ENCODE measurements at regions of chr15 and their contacts with region 1.

Region 1: GRCh38 chr15:69413822-69414700 is at the start of gene KIF23:
- DNase-seq: peak; percentile 89 to 92
- H3K4me3 ChIP-seq: peak within 1 kb of the TSS; percentile 86
- H3K27ac ChIP-seq: peak within 1 kb of the TSS; percentile 63
- H3K4me1 ChIP-seq: peaks cover 39% of the 10 kb centered on the region
- H3K27me3 ChIP-seq: no peaks in the 10 kb centered on the region
- CTCF ChIP-seq: no peak
- total RNA-seq, gene KIF23: 78.7 and 100 TPM in 2 replicates

Region 2: DNA sequence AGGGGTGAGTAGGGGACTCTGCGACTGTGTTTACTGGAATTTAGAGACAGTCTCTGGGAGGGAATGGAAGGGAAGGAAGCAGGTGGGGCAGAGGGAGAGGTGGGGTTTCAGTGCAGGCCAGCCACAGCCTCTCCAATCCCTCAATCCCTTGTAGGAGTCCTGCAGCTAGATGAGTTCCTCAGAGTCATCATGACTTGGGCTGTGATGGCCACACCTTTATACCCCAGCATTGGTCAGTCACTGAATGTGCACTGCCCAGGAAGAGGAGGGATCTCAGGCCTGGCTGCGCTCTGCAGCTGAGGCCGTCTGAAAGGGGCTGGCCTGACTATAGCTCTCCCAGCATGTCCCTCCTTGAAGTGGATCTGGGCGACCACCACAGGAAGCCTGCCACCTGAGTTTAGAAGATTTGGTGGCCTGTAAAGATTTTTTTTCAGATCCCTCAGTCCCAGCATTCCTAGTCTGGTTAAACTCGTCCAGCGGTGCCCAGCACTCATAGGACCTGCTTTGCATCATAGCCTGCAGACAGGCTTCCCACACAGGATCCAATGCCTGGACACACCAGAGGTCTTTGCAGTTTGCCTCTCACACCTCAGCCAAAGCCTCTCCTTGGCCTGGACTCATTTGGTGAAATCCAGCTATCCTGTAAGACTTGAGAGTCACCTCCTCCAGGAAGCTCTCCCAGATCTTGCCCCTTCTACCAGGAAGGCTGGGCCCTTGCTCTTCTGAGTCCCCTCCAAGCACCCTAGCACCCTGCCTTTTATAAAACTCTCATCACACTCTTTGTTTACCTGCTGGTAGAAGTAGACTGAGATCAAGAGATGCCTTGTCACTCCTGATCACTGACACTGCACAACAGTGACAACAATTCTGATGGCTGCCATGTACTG is 320.7 kb before region 1 on chr15:
- CTCF ChIA-PET with region 1: interaction called, 13 read pairs
- POLR2A ChIA-PET with region 1: no interaction called
- intact Hi-C with region 1: no loop called
- DNase-seq: peak; percentile 86 to 89
- H3K4me3 ChIP-seq: peak overlapping the region; percentile 39; the same call in 1 of the 2 replicates
- H3K27ac ChIP-seq: peak overlapping the region; percentile 100
- H3K4me1 ChIP-seq: peaks cover 62% of the 10 kb centered on the region
- H3K27me3 ChIP-seq: no peaks in the 10 kb centered on the region
- CTCF ChIP-seq: no peak

Region 3: DNA sequence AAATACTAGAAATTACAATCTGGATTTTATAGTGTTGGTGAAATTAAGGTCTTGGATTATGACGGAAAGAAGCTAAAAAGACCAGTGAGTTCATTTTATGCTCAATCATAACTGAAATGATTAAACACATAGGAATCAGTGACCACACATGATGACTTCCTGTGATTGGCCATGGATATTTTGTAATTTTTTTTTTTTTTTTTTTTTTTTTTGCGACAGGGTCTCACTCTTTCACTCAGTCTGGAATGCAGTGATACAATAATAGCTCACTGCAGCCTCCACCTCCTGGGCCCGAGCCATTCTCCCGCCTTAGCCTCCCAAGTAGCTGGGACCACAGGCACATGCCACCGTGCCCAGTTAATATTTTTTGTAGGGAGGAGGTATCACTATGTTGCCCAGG is 67.9 kb before region 1 on chr15:
- CTCF ChIA-PET with region 1: no interaction called
- POLR2A ChIA-PET with region 1: interaction called, 32 read pairs
- intact Hi-C with region 1: no loop called
- DNase-seq: no peak
- H3K4me3 ChIP-seq: no peak overlapping the region
- H3K27ac ChIP-seq: no peak overlapping the region
- H3K4me1 ChIP-seq: no peaks in the 10 kb centered on the region; the same call in 1 of the 2 replicates
- H3K27me3 ChIP-seq: no peaks in the 10 kb centered on the region
- CTCF ChIP-seq: no peak

Region 4: DNA sequence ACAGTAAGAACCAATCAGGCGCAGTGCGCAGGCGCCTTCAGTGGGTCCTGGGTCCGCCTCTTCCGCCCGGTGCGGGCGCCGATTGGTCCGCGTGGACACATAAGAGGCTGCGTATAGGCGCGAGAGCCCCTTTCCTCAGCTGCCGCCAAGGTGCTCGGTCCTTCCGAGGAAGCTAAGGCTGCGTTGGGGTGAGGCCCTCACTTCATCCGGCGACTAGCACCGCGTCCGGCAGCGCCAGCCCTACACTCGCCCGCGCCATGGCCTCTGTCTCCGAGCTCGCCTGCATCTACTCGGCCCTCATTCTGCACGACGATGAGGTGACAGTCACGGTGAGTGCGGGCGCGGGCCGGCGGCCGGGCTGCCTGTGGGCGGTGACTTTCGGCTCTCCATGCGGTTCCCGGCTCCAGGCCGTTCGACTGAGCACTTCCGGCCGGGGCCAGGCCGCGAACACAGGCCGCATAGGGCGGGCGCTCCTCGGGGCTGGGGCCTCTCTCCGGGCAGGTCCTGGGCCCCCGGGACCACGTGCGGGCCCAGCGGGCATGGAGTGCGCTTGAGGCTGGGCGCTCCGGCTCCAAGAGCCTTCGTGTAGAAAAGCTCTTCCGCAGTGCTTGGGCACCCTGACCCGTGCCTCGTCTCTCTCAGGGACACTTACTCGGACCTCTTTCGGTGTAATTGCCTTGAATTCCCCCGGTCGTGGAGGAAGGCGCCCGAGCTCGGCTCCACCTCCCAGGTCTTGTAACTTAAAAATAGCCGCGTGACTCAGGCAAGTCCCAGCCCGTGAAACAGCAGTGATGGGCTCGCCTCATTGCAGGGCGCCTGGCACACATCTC is 38.8 kb after region 1 on chr15 and contains the start of gene RPLP1:
- CTCF ChIA-PET with region 1: no interaction called
- POLR2A ChIA-PET with region 1: interaction called, 5 read pairs
- intact Hi-C with region 1: loop called (anchors 5 kb)
- DNase-seq: peak; percentile 70 to 93
- H3K4me3 ChIP-seq: peak within 1 kb of the TSS; percentile 71
- H3K27ac ChIP-seq: peak within 1 kb of the TSS; percentile 82
- H3K4me1 ChIP-seq: peaks cover 25% of the 10 kb centered on the region
- H3K27me3 ChIP-seq: no peaks in the 10 kb centered on the region
- CTCF ChIP-seq: no peak
- total RNA-seq, gene RPLP1: 1,651 and 3,001 TPM in 2 replicates

Region 5: DNA sequence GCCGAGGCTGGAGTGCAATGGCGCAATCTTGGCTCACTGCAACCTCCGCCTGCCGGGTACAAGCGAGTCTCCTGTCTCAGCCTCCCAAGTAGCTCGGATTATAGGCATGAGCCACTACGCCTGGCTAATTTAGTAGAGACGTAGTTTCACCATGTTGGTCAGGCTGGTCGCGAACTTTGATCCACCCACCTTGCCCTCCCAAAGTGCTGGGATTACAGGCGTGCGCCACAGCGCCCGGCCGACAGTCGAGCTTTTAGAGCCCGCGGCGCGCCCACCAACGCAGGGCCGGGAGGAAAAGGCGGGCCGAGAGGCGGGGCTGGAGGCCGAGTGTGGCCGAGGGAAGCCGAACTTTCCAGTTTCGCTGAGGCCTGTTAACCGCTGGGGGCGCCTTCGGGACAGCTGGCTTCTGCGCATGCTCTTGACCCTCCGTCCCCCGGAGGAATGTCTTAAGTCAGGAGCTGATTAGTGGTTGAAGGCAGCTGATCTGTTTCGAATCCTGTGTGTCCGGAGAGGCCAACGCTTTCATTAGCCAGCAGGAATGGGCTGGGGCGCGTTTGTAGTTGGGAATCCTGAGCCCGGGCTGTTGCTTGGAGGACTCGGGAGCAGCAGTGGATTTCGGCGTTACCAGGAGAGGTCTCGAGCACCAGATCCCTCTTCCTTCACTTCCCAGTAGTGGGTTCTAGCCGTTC is 48.6 kb after region 1 on chr15:
- CTCF ChIA-PET with region 1: interaction called, 10 read pairs
- POLR2A ChIA-PET with region 1: interaction called, 10 read pairs
- intact Hi-C with region 1: no loop called
- DNase-seq: peak; percentile 89 to 97
- H3K4me3 ChIP-seq: peak overlapping the region; percentile 61
- H3K27ac ChIP-seq: peak overlapping the region; percentile 83
- H3K4me1 ChIP-seq: peaks cover 33% of the 10 kb centered on the region
- H3K27me3 ChIP-seq: no peaks in the 10 kb centered on the region
- CTCF ChIP-seq: peak; percentile 78

Measured in PC-9 (cell line).